Common myeloid progenitor, CD34-positive (primary cell): ENCODE measurements at regions of chr9 and their contacts with region 1.

Region 1: DNA sequence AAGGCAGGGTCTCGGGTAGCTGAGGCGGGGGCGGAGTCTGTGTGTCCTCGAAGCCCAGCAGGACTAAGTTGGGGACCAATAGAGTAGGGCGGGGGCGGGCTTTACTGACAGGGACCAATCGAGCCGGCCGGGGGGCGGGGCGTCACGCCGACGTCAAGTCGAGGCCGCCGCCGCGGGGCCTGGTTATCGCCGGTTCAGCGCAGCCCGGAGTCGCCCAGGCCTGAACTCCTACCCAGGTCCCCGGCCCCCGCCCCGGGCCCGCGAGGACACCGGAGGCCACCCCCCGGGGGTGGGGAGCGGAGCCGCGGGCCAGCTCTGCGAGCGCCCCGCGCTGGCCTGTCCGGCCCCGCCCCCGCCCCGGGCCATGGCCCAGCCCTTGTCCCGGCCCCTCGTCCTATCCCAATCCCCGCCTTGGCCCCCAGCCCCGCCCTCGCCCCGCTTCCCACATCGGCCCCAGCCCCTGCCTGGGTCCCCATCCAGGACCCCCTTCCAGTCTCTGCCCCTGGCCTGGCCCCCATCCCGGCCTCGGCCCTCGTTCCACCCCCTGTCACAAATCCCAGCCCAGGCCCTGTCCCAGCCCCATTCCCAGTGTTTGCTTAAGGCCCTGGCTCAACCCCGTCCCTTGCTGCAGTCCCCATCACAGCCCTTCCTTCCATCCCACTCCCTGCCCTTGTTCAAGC is at the start of gene TMEM8B:
- DNase-seq: peak; percentile 92 to 93 (median 92)
- H3K4me3 ChIP-seq: peak within 1 kb of the TSS; percentile 48 to 84 (median 75)
- H3K27ac ChIP-seq: peak within 1 kb of the TSS in 1 of 2 experiments; percentile 67
- H3K4me1 ChIP-seq: peaks cover 2 to 27% (median 24%) of the 10 kb centered on the region in 4 experiments
- H3K27me3 ChIP-seq: peaks cover 0 to 6% (median 3%) of the 10 kb centered on the region in 5 experiments

Region 2: DNA sequence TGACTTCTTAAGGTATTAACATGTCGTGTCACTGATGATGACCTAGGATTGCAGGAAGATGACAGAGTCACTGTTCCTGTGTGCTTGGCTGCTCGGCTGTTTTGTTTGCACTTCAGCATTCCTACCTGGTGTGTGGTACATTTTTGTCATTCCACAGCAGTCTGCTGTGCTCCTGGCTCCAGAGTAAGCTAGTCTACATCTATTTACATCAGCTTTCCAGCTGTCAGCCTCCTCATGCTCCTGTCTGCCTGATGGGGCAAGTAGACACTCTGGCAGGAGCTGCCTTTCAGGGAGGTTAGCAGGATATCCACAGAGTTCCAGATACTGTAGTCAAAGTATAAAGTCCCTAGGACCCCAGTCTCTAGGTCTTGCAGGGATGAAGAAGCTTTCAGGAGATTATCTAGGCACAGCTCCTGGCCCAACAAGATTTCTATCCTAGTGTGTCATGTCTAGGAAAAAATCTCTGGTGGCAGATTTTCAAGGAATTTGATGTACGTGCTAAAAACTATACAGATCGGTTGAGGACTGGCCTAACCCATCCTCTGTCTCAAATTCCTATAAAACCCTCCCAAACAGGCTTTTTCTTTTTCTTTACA is 310.9 kb before region 1 on chr9:
- CTCF ChIA-PET with region 1: no interaction called
- POLR2A ChIA-PET with region 1: no interaction called
- DNase-seq: no peak
- H3K4me3 ChIP-seq: no peak overlapping the region
- H3K27ac ChIP-seq: no peak overlapping the region
- H3K4me1 ChIP-seq: peaks cover 2 to 45% (median 15%) of the 10 kb centered on the region in 4 experiments
- H3K27me3 ChIP-seq: no peaks in the 10 kb centered on the region

Region 3: DNA sequence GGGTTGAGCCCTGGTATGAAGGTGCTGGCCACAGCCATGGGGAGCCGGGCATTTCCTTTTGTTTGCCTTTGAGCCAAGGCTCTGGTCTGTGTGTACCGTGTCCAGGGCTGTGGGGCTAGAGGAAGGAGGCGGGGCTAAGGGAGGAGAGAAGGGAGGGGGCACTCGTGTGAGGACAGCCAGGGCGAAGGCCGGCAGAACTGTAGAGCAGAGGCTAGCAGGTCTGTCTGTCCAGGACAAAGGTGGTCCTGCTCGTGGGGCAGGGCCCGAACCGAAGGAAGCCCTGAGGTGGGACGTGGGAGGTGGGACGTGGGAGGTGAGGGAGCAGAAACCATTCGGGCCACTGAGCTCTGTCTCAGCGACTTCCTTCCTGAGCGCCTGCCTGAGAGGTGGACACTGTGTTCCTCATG is 265.4 kb before region 1 on chr9:
- CTCF ChIA-PET with region 1: no interaction called
- POLR2A ChIA-PET with region 1: no interaction called
- DNase-seq: no peak
- H3K4me3 ChIP-seq: no peak overlapping the region
- H3K27ac ChIP-seq: no peak overlapping the region
- H3K4me1 ChIP-seq: peaks cover 0 to 16% (median 8%) of the 10 kb centered on the region in 4 experiments
- H3K27me3 ChIP-seq: no peaks in the 10 kb centered on the region

Region 4: GRCh38 chr9:35748858-35749514 is 80.2 kb before region 1 on chr9 and contains the starts of genes GBA2 and RGP1:
- CTCF ChIA-PET with region 1: interaction called, 15 read pairs
- POLR2A ChIA-PET with region 1: no interaction called
- DNase-seq: peak; percentile 32 to 72 (median 60)
- H3K4me3 ChIP-seq: peak within 1 kb of the TSS; percentile 79 to 92 (median 86)
- H3K27ac ChIP-seq: peak within 1 kb of the TSS; percentile 18 to 84
- H3K4me1 ChIP-seq: peaks cover 10 to 39% (median 34%) of the 10 kb centered on the region in 4 experiments
- H3K27me3 ChIP-seq: no peaks in the 10 kb centered on the region

Region 5: DNA sequence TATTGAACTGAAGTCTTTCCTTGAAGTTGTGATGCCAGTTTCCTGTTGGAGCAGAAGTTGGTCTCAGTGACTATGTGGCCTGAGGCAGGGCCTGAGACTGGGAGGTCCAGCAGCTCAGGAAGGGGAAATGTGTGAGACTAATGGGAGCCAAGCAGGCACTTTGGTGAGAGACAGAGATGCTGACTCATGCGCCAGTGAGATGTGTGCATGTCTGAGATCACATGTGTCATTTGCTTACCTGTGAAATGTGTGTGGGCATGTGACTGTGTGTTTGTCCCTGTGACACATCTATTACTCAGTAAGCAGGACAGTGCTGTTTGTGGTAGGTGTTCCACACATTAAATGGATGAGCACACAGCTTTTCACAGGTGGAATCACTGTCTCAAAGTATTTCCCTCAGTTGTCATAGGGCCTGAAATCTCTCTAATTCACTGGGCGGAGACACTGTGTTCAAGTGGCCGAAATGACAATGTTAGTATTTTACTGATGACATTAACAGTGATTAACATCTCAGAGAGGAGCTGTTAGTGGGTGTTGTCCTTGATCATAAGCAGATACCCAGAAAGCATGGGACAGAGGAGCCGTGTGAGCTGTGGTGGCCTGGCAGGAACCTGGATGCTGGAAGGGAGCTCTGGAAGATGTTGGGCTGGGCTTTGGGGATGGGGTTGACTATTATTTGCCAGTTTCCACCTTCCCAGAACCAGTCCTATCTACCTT is 30.4 kb before region 1 on chr9:
- CTCF ChIA-PET with region 1: interaction called, 24 read pairs
- POLR2A ChIA-PET with region 1: no interaction called
- DNase-seq: peak in 2 of 3 donors; percentile 49 to 66
- H3K4me3 ChIP-seq: no peak overlapping the region
- H3K27ac ChIP-seq: peak overlapping the region in 1 of 2 experiments; percentile 5
- H3K4me1 ChIP-seq: peaks cover 0 to 9% (median 3%) of the 10 kb centered on the region in 4 experiments
- H3K27me3 ChIP-seq: no peaks in the 10 kb centered on the region

Region 6: DNA sequence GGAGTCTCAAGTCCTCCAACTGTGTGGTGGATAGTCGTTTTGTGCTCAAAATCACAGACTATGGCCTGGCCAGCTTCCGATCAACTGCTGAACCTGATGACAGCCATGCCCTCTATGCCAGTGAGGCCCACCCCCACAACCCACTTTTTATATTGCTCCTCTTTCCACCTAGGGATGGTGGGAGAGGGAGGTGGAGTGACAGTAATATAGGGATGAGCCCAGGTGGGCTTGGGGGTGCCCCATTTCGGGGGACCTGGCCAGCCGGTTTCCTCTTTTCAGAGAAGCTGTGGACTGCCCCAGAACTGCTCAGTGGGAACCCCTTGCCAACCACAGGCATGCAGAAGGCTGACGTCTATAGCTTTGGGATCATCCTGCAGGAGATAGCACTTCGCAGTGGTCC is 23.7 kb before region 1 on chr9:
- CTCF ChIA-PET with region 1: interaction called, 12 read pairs
- POLR2A ChIA-PET with region 1: no interaction called
- DNase-seq: no peak
- H3K4me3 ChIP-seq: no peak overlapping the region
- H3K27ac ChIP-seq: no peak overlapping the region
- H3K4me1 ChIP-seq: peaks cover 0 to 4% (median 0%) of the 10 kb centered on the region in 4 experiments
- H3K27me3 ChIP-seq: no peaks in the 10 kb centered on the region

Region 7: DNA sequence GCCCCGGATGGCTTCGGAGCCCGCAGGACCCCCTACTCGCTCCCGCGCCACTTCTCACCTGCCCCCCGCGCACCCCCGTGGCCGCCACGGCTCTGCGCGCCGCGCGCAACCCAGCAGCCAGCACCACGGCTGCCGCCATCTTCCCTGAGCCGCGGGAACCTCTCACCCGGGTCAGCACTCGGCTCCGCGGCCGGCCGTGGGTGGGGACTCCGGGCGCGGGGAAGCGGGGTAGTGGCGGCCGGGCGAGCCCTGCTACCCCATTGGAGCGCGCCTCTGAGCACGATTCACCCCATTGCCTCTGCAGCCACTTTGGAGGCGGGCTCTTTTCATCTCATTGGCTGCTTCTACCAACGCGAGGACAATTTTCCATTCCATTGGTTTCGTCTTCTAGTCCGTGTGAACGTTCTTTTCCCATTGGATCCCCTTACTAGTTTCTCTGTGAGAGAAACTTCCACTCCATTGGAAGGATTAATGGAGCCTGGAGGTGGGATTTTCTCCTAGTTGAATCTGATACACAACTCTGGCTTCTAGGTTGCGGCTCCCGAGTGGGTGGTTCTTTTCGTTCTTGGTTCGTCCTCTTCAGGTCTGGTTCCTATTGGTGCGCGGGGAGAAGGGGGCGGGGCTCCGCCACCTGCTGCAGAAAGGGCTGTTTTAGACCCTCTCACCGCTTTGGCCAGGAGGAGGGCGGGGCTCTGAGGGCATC is 14.2 kb before region 1 on chr9 and contains the start of gene HINT2:
- CTCF ChIA-PET with region 1: interaction called, 39 read pairs
- POLR2A ChIA-PET with region 1: no interaction called
- DNase-seq: peak; percentile 99
- H3K4me3 ChIP-seq: peak within 1 kb of the TSS; percentile 79 to 95 (median 84)
- H3K27ac ChIP-seq: peak within 1 kb of the TSS; percentile 48 to 83
- H3K4me1 ChIP-seq: peaks cover 17 to 42% (median 33%) of the 10 kb centered on the region in 4 experiments
- H3K27me3 ChIP-seq: no peaks in the 10 kb centered on the region

Region 8: DNA sequence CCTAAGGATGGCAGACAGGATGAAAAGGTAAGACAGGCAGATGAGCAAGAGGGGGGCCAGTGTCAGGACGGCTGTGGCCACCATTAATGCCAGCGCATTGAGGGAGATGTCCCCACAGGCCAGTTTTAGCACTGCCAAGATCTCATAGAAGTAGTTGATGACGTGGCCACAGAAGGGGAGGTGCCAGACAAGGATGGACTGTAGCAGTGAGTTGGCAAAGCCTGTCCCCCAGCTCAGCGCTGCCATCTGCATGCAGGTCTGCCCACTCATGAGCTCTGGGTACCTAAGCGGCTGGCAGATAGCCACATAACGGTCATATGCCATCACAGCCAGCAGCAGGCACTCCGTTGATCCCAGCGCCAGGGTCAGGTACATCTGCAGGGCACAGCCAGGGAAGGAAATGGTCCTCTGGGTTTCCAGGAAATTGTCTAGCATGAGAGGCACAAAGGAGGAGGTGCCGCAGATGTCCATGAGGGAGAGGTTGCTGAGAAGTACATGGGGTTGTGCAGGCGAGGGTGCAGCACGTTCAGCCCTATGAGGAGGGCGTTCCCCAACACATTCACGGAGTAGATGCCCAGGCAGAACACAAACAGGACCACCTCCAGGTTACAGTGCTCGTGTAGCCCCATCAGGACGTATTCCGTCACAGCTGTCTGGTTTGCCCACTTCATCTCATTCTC is 30.2 kb after region 1 on chr9:
- CTCF ChIA-PET with region 1: interaction called, 45 read pairs
- POLR2A ChIA-PET with region 1: no interaction called
- DNase-seq: peak; percentile 80 to 89 (median 85)
- H3K4me3 ChIP-seq: no peak overlapping the region
- H3K27ac ChIP-seq: no peak overlapping the region
- H3K4me1 ChIP-seq: no peaks in the 10 kb centered on the region
- H3K27me3 ChIP-seq: peaks cover 0 to 94% (median 39%) of the 10 kb centered on the region in 5 experiments

Region 9: GRCh38 chr9:35882263-35882848 is 53.1 kb after region 1 on chr9:
- CTCF ChIA-PET with region 1: interaction called, 49 read pairs
- POLR2A ChIA-PET with region 1: no interaction called
- DNase-seq: peak; percentile 55 to 67 (median 58)
- H3K4me3 ChIP-seq: no peak overlapping the region
- H3K27ac ChIP-seq: no peak overlapping the region
- H3K4me1 ChIP-seq: no peaks in the 10 kb centered on the region
- H3K27me3 ChIP-seq: peaks cover 0 to 3% (median 0%) of the 10 kb centered on the region in 5 experiments

Region 10: GRCh38 chr9:36194386-36195000 is 365.3 kb after region 1 on chr9:
- CTCF ChIA-PET with region 1: no interaction called
- POLR2A ChIA-PET with region 1: no interaction called
- DNase-seq: no peak
- H3K4me3 ChIP-seq: peak overlapping the region in 1 of 7 experiments; percentile 7
- H3K27ac ChIP-seq: no peak overlapping the region
- H3K4me1 ChIP-seq: peaks cover 24 to 36% (median 30%) of the 10 kb centered on the region in 4 experiments
- H3K27me3 ChIP-seq: no peaks in the 10 kb centered on the region